Activated CD4-positive, alpha-beta T cell treated with anti-CD3 and anti-CD28 coated beads, Interleukin-2, amount 10 ng/mL, durations not matched to agents 24 days and 14 days (primary cell): ENCODE measurements at regions of chr2 and their contacts with region 1.

Region 1: DNA sequence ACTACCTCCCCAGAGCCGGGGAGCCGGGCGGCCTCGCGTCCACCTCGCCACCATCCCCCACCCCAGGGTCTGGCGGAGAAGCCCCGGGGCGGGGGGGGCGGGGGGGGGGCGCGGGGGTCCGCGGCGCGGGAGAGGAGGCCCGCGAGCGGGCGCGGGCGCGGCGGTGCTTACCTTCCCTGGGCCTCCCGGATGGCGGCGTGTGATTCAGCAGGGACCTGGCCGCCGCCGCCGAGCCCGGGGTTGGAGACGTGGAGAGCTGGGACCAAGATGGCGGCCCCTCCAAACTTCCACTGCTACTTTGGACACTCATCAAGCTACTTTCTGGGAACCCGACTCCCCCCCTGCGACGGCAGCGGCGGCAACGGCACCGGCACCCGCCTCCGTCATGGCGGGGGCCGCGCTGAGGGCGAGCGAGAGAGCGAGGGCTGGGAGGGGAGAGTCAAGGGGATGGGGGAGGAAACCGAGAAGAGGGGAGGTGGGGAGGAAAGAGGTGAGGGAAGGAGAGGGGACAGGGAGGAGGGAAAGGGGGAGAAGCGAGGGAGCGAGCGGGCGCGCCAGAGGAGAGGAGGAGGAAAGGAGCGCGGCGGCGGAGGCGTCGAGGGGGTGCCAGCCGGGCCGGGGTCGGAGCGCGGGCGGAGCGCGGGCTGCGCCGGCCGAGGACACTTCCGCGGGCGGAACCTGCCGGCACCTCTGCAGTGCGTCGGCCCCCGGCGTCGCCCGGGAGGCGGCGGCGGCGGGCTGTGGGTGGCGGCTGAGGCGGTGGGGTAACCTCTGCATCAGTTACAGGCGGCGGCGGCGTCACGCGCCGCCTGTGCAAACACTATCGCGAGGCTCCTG is at the start of gene TLK1:
- DNase-seq: peak; percentile 93
- H3K4me3 Mint-ChIP-seq: peak within 1 kb of the TSS; percentile 92
- H3K27ac Mint-ChIP-seq: peak within 1 kb of the TSS; percentile 98
- H3K4me1 Mint-ChIP-seq: peaks cover 49% of the 10 kb centered on the region
- H3K27me3 Mint-ChIP-seq: no peaks in the 10 kb centered on the region
- total RNA-seq, gene TLK1: 91.8 and 94.9 TPM in 2 replicates

Region 2: GRCh38 chr2:170973492-170974303 is 186.6 kb before region 1 on chr2:
- intact Hi-C with region 1: loop called (anchors 1 kb)
- DNase-seq: peak; percentile 96
- H3K4me3 Mint-ChIP-seq: peak overlapping the region; percentile 82
- H3K27ac Mint-ChIP-seq: peak overlapping the region; percentile 56
- H3K4me1 Mint-ChIP-seq: peaks cover 10% of the 10 kb centered on the region
- H3K27me3 Mint-ChIP-seq: peaks cover 3% of the 10 kb centered on the region

Region 3: DNA sequence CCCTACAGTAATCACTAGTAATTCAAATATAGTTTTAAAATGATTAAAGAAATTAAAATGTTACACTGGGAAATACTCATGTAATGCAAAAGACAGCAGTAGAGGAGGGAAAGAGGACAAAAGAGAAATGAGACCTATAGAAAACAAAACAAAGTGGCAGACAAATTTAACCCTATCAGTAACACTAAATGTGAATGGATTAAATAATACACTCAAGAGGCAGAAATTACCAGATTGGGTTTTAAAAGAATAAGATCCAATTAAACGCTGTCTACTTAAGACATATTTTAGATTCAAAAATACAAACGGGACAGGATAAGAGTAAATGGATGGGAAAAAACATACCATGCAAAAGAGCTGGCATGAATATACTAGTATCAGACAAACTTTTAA is 16.7 kb before region 1 on chr2:
- intact Hi-C with region 1: loop called (anchors 2 kb)
- DNase-seq: no peak
- H3K4me3 Mint-ChIP-seq: no peak overlapping the region
- H3K27ac Mint-ChIP-seq: no peak overlapping the region
- H3K4me1 Mint-ChIP-seq: peaks cover 44% of the 10 kb centered on the region
- H3K27me3 Mint-ChIP-seq: no peaks in the 10 kb centered on the region

Region 4: DNA sequence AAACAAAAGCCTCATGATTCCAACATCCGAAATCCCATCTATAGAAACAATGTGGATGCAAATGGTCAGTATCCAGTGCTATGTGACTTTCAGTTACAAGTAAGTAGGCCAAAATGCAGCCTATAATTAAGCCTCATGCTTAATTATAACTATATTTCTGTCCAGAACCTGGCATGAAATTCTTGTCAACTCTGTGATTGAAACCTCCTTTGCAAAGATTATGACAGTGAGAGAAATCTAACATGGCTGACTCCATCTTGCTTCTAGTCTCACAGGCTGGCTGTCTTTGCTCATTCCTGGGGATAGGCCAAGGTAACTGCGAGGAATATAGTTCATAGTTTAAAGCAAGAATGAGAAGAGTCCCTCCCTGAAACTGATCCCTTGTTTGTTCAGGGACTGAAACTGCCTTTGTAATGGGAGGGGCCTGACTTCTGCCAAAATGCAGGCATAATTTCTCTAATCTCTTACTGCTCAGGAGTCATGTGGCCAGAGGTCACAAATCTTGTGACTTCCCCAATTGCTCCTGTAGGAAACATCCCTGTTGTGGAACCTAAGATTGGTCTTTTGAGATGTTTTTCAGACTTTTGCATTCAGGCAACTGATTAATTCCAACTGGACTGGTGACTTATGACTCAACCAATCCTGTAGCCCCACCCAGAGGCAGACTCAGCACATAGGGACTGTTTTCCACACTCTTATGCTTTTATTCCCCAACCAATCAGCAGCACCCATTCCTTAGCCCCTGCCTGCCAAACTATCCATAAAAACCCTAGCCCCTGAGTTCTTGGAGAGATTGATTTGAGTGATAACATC is 84.8 kb after region 1 on chr2:
- intact Hi-C with region 1: loop called (anchors 5 kb)
- DNase-seq: no peak
- H3K4me3 Mint-ChIP-seq: no peak overlapping the region
- H3K27ac Mint-ChIP-seq: no peak overlapping the region
- H3K4me1 Mint-ChIP-seq: peaks cover 43% of the 10 kb centered on the region
- H3K27me3 Mint-ChIP-seq: no peaks in the 10 kb centered on the region

Region 5: DNA sequence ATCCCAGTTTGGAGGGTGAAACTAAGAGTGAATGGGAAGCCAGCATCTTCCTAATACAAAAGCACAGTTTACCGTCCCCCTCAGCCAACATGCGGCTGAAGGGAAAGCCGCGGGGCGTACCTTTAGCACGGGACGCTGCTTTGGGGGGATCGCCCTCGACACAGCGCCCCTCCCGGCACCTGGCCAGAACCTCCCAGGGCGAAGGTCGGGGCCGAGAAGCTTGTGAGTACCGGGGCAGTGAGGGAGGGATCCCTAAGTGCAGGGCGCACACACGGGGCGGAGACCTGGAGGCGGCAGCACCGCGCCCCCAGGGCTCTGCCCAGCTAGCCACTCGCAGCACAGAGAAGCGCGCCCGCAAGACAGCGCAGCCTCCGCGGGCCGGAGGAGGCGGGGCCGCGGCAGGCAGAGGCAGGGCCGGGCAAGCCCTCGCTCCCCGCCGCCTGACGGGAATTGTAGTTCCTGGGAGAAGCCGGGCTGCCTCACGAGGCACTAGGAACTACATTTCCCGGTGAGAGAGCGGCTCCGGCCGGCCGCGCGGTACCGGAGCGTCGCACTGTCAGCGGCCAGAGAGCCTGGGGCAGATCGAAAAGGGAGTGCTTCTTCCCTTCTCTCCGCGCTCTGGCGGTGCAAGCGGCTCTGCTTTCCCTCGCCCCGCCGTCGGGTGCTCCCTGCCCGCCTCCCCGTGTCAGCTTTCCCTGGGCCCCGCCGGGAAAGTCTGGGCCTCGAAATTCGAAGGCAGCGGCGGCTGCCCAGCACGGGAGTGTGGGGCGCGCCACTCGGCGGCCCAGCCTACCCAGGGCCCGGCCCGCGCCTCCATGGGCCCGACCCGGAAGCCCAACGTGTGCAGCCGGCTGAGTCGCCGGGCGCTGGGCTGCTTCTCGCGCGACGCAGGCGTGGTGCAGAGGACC is 273.7 kb after region 1 on chr2 and contains the starts of genes DCAF17 and METTL8:
- intact Hi-C with region 1: loop called (anchors 1 kb)
- DNase-seq: peak; percentile 98
- H3K4me3 Mint-ChIP-seq: peak within 1 kb of the TSS; percentile 82
- H3K27ac Mint-ChIP-seq: peak within 1 kb of the TSS; percentile 88
- H3K4me1 Mint-ChIP-seq: peaks cover 23% of the 10 kb centered on the region
- H3K27me3 Mint-ChIP-seq: no peaks in the 10 kb centered on the region
- total RNA-seq, gene DCAF17: 27.3 and 27.4 TPM in 2 replicates
- total RNA-seq, gene METTL8: 33.1 and 42.9 TPM in 2 replicates

Region 6: GRCh38 chr2:172226244-172227061 is 1066.1 kb after region 1 on chr2:
- intact Hi-C with region 1: no loop called
- DNase-seq: peak; percentile 70
- H3K4me3 Mint-ChIP-seq: no peak overlapping the region
- H3K27ac Mint-ChIP-seq: no peak overlapping the region
- H3K4me1 Mint-ChIP-seq: peaks cover 29% of the 10 kb centered on the region
- H3K27me3 Mint-ChIP-seq: peaks cover 2% of the 10 kb centered on the region